ENCODE measurements at regions of chr11 and their contacts with region 1.

Region 1: DNA sequence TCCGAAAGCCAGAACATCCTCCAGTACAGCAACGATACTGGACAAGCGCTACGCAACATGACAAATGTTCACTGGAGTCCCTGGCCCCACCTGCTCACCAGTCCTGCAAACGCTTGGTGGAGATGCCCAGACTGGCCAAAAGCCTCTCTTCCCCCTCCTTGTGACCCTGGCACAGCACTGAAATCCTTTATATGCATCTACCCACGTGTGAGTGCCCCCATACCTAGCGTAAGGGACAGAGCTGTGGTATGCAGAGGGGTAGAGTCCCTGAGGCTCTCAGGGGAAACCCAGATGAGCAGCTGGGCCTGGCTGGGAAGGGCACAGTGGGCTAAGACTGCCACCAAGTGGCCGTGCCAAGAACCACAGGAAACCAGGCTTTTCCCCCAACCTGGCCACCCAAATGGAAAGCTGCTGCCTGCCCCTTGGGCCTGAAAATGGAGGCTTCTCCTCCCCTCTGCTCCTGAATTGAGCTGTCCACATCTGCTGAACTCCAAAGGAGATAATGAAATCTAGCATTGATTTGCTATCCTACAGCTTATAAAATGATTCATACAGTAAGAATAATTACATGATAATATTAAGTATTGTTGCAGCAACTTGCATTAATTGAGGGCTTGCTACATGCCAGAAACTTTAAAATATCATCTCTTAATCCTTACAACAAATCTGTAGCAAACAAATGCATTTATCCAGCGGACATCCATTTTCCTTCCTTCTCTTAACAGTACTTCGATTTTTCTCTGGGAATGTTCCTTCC is 24.8 kb upstream of the TTC12 start:
- DNase-seq: peak; percentile 23 to 65
- H3K4me3 ChIP-seq: no peak overlapping the region
- H3K4me1 ChIP-seq: no peaks in the 10 kb centered on the region
- H3K27me3 ChIP-seq: peaks cover 12% of the 10 kb centered on the region; the same call in 1 of the 2 replicates

Region 2: GRCh38 chr11:112219476-112220232 is 1070.0 kb before region 1 on chr11:
- in situ Hi-C with region 1: loop called (anchors 10 kb)
- DNase-seq: peak; percentile 48 to 56
- H3K4me3 ChIP-seq: no peak overlapping the region
- H3K4me1 ChIP-seq: no peaks in the 10 kb centered on the region
- H3K27me3 ChIP-seq: no peaks in the 10 kb centered on the region; the same call in 1 of the 2 replicates

Region 3: DNA sequence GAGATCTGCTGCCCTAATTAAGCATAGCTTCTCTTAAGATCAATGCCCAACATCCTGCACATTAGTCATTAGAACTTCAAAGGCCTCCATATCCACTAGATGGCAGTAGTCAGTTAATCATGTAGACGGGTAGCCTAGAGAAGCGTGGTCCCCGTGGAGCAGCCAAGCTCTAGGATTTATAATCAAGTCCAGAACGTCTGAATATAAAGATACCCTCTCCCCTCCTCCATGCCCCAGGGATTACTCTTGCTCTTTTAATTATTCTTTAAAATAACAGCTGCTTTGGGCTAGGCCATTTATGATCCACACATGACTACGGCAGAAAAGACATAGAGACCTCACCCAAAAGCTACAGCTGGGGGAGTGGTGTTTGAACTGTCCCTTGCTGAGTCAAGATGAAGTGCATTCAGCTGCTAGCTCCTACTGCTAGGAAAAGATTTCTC is 701.3 kb before region 1 on chr11:
- in situ Hi-C with region 1: loop called (anchors 25 kb)
- DNase-seq: peak; percentile 46 to 64
- H3K4me3 ChIP-seq: no peak overlapping the region
- H3K4me1 ChIP-seq: no peaks in the 10 kb centered on the region
- H3K27me3 ChIP-seq: no peaks in the 10 kb centered on the region

Region 4: DNA sequence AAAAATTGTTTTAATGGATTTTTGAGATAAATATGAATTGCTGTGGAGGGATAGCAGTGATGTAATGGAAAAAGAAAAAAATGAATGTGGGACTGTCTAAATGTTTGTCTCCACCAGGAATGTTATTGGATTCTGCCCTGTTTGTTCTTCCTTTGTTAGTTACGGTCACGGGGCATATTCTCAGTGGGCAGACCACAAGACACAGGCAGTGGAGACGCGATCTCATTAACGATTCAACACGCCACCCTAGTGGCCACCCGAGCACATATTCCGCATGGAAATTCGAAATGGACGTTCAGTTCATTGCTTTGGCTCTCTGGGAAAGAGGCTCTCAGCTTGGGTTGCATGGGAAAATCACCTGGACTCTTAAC is 127.0 kb before region 1 on chr11:
- in situ Hi-C with region 1: no loop called
- DNase-seq: no peak
- H3K4me3 ChIP-seq: no peak overlapping the region
- H3K4me1 ChIP-seq: no peaks in the 10 kb centered on the region
- H3K27me3 ChIP-seq: 0 out of 2 replicates have a peak, but pooled peaks cover 3% of the 10 kb centered on the region

Region 5: GRCh38 chr11:113577356-113578032 is 287.9 kb after region 1 on chr11:
- in situ Hi-C with region 1: no loop called
- DNase-seq: no peak
- H3K4me3 ChIP-seq: no peak overlapping the region
- H3K4me1 ChIP-seq: peaks cover 3% of the 10 kb centered on the region; the same call in 1 of the 2 replicates
- H3K27me3 ChIP-seq: no peaks in the 10 kb centered on the region

Region 6: GRCh38 chr11:113715882-113716625 is 426.4 kb after region 1 on chr11:
- in situ Hi-C with region 1: no loop called
- DNase-seq: no peak
- H3K4me3 ChIP-seq: no peak overlapping the region
- H3K4me1 ChIP-seq: no peaks in the 10 kb centered on the region
- H3K27me3 ChIP-seq: no peaks in the 10 kb centered on the region

Region 7: GRCh38 chr11:114326776-114327175 is 1037.2 kb after region 1 on chr11:
- in situ Hi-C with region 1: no loop called
- DNase-seq: no peak
- H3K4me3 ChIP-seq: no peak overlapping the region
- H3K4me1 ChIP-seq: no peaks in the 10 kb centered on the region
- H3K27me3 ChIP-seq: no peaks in the 10 kb centered on the region